GM12878 (cell line): ENCODE measurements at regions of chr6 and their contacts with region 1.

Region 1: DNA sequence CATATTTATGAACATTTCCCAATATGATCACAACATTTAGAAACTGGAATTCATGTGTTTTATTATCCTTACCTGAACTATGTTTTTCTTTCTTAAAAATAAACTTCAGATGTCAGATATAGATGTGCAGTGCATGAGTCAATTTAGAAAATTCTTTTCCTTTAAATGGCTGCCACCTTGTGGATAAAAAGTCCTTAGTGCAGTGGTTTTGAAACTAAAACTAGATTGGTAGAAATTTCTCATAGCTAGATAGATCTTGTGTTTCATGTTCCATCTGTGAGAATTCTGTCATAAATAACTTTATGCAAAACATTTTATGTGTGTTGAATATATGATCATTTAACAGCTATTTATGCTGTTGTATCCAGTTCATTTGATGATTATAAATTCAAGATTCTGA is 134.9 kb downstream of the KLHL32 start:
- DNase-seq: peak; percentile 17
- ATAC-seq: peak; percentile 92
- H3K4me3 ChIP-seq: no peak overlapping the region
- H3K27ac ChIP-seq: no peak overlapping the region
- H3K4me1 ChIP-seq: no peaks in the 10 kb centered on the region
- H3K27me3 ChIP-seq: no peaks in the 10 kb centered on the region; a peak in 1 of 4 replicates
- CTCF ChIP-seq: peak; percentile 41 to 63 (median 50); a peak in 5 of 6 replicates
- EP300 ChIP-seq: no peak
- POLR2A ChIP-seq: no peak
- RAD21 ChIP-seq: peak; percentile 80

Region 2: DNA sequence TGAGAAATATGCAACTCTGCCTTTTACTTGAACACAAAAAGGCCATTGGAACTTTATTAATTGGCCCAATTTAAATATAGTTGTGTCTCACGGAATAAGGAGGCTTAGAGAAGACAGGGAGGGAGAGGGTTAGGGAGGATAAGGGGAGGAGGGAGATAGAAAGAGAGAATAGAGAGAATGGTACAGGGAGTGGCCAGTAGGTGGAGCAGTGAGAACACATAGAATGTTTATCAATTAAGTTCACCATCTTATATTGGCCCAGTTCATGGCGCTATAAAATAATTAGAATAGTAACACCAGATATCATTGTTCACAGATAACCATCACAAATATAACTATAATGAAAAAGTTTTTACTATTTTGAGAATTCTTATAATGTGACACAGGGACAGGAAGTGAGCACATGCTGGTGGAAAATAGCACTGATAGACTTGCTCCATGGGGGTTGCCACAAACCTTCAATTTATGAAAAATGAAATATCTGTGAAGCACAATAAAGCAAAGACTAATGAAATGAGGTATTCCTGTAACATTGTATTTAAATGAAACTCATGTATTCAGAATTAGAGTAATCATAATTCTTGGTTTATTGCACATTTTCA is 1856.2 kb before region 1 on chr6:
- CTCF ChIA-PET with region 1: no interaction called
- POLR2A ChIA-PET with region 1: no interaction called
- RAD21 ChIA-PET with region 1: no interaction called
- SMC1A ChIA-PET with region 1: no interaction called
- in situ Hi-C with region 1: no loop called
- intact Hi-C with region 1: loop called (anchors 10 kb)
- DNase-seq: no peak
- ATAC-seq: peak; percentile 91
- H3K4me3 ChIP-seq: no peak overlapping the region
- H3K27ac ChIP-seq: no peak overlapping the region
- H3K4me1 ChIP-seq: no peaks in the 10 kb centered on the region
- H3K27me3 ChIP-seq: no peaks in the 10 kb centered on the region
- CTCF ChIP-seq: peak; percentile 61 to 68 (median 62)
- EP300 ChIP-seq: no peak
- POLR2A ChIP-seq: no peak
- RAD21 ChIP-seq: peak; percentile 27; the same call in 1 of the 2 replicates

Region 3: GRCh38 chr6:96391776-96392360 is 667.6 kb before region 1 on chr6:
- CTCF ChIA-PET with region 1: no interaction called
- POLR2A ChIA-PET with region 1: no interaction called
- RAD21 ChIA-PET with region 1: no interaction called
- SMC1A ChIA-PET with region 1: no interaction called
- in situ Hi-C with region 1: no loop called
- intact Hi-C with region 1: loop called (anchors 5 kb)
- DNase-seq: no peak
- ATAC-seq: peak; percentile 63
- H3K4me3 ChIP-seq: no peak overlapping the region
- H3K27ac ChIP-seq: no peak overlapping the region
- H3K4me1 ChIP-seq: no peaks in the 10 kb centered on the region
- H3K27me3 ChIP-seq: no peaks in the 10 kb centered on the region
- CTCF ChIP-seq: no peak
- EP300 ChIP-seq: no peak
- POLR2A ChIP-seq: no peak
- RAD21 ChIP-seq: no peak

Region 4: GRCh38 chr6:96542702-96543101 is 516.8 kb before region 1 on chr6:
- CTCF ChIA-PET with region 1: interaction called, 8 read pairs
- POLR2A ChIA-PET with region 1: no interaction called
- RAD21 ChIA-PET with region 1: interaction called, 5 read pairs
- SMC1A ChIA-PET with region 1: interaction called, 4 read pairs
- in situ Hi-C with region 1: no loop called
- intact Hi-C with region 1: loop called (anchors 2 kb)
- DNase-seq: no peak
- ATAC-seq: peak; percentile 79
- H3K4me3 ChIP-seq: no peak overlapping the region
- H3K27ac ChIP-seq: no peak overlapping the region
- H3K4me1 ChIP-seq: no peaks in the 10 kb centered on the region
- H3K27me3 ChIP-seq: no peaks in the 10 kb centered on the region
- CTCF ChIP-seq: peak; percentile 26 to 45 (median 31); a peak in 4 of 6 replicates
- EP300 ChIP-seq: no peak
- POLR2A ChIP-seq: no peak
- RAD21 ChIP-seq: peak; percentile 61

Region 5: GRCh38 chr6:96837081-96837971 is 222.1 kb before region 1 on chr6 and contains the start of gene GPR63:
- CTCF ChIA-PET with region 1: interaction called, 3 read pairs
- POLR2A ChIA-PET with region 1: no interaction called
- RAD21 ChIA-PET with region 1: interaction called, 3 read pairs
- SMC1A ChIA-PET with region 1: no interaction called
- in situ Hi-C with region 1: no loop called
- intact Hi-C with region 1: loop called (anchors 10 kb)
- DNase-seq: peak; percentile 50
- ATAC-seq: peak; percentile 92
- H3K4me3 ChIP-seq: peak within 1 kb of the TSS; percentile 92
- H3K27ac ChIP-seq: peak within 1 kb of the TSS; percentile 62
- H3K4me1 ChIP-seq: no peaks in the 10 kb centered on the region; the same call in 1 of the 2 replicates
- H3K27me3 ChIP-seq: no peaks in the 10 kb centered on the region; a peak in 1 of 4 replicates
- CTCF ChIP-seq: 0 out of 6 replicates have a peak, but pooled peaks of 1 of the 3 experiments have one; percentile 5
- EP300 ChIP-seq: no peak; a peak in 1 of 4 replicates
- POLR2A ChIP-seq: peak; percentile 86
- RAD21 ChIP-seq: no peak
- polyA plus RNA-seq, gene GPR63: 1.6 to 1.7 TPM